Activated CD8-positive, alpha-beta memory T cell treated with anti-CD3 and anti-CD28 coated beads, Interleukin-2, amount 10 ng/mL, durations not matched to agents 7 days and 5 days (primary cell): ENCODE measurements at regions of chr22 and their contacts with region 1.

Region 1: DNA sequence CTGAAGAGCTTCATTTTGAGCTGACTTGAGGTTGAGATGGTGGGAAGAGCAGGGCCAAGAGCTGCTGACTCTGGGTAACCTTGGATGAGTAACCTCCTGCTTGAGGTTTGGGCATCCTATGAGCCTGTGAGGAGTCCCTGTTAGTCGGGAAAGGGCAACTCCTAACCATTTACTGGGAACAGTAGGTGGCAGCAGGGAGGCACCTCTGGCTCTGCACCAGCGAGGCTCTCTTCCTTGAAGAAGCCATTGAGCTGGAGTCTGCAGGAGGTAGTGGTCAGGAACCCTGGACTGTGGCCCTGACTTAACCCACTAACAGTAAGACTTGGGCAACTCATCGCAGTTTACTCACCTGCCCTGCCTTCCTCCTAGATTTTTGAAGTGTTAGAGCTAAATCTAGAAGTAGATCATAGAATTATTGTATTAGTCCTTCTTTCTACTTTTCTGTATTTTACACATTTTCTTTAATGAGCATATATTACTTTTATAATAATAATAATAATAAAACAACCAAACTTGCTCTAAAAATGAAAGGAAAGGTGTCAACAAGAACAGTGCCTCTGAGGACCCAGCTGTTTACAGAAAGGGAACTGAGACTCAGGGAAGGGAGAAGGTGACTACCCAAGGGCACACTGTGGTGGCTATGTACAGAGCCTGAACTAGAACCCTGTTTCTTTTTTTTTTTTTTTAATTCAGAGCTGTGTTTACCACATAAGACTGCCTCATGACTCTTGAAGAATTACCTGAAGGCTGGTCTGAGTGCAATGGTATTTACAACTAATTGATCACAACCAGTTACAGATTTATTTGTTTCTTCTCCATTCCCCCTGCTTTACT is 47.5 kb downstream of the MEI1 start:
- DNase-seq: peak; percentile 72
- ATAC-seq: peak; percentile 96
- H3K4me3 Mint-ChIP-seq: no peak overlapping the region
- H3K27ac Mint-ChIP-seq: no peak overlapping the region
- H3K4me1 Mint-ChIP-seq: peaks cover 6% of the 10 kb centered on the region
- H3K27me3 Mint-ChIP-seq: peaks cover 15% of the 10 kb centered on the region

Region 2: DNA sequence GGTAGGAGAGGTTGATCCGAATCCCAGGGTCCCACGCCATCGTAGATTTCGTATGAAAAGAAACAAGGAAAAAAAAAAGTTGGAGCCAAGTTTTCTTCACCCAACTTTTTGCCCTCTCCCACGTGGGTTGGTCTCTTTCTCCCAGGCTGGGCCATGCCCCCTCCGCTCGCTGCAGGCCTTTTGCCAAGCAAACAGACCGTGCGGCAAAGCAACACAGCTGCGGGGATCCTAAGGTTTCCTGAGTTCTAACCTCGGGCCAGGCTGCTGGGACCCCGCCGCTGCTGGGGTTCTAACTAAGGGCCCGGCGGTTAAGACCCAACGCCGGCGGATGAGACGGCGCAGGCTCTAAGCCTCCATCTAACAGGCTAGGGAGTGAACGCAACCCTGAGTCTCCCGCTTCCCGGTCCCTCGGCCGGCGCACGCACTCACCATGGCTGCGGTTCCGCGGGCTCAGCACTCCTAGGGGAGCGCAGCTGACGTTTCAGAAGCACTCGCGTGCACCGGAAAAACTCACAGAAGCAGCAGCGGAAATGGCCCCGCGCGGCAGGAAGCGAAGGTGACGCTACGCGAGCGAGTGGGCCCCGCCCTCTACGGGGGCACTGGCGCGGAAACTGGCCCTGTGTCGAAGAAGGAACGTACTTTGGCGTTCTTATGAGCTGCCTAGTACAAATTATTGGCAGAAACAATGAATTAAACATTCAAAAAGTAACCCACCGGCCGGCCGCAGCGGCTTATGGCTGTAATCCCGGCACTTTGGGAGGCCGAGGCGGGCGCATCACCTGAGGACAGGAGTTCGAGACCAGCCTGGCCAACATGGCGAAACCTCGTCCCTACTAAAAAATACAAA is 58.2 kb before region 1 on chr22 and contains the start of gene SNU13:
- CTCF ChIA-PET with region 1: no interaction called
- DNase-seq: peak; percentile 96
- ATAC-seq: peak; percentile 93
- H3K4me3 Mint-ChIP-seq: peak within 1 kb of the TSS; percentile 96
- H3K27ac Mint-ChIP-seq: peak within 1 kb of the TSS; percentile 98
- H3K4me1 Mint-ChIP-seq: peaks cover 33% of the 10 kb centered on the region
- H3K27me3 Mint-ChIP-seq: no peaks in the 10 kb centered on the region
- total RNA-seq, gene SNU13: 176 to 193 TPM

Region 3: GRCh38 chr22:41780746-41781505 is 34.1 kb after region 1 on chr22:
- CTCF ChIA-PET with region 1: interaction called, 31 read pairs
- DNase-seq: peak; percentile 98
- ATAC-seq: peak; percentile 97
- H3K4me3 Mint-ChIP-seq: peak overlapping the region; percentile 76
- H3K27ac Mint-ChIP-seq: peak overlapping the region; percentile 99
- H3K4me1 Mint-ChIP-seq: peaks cover 41% of the 10 kb centered on the region
- H3K27me3 Mint-ChIP-seq: no peaks in the 10 kb centered on the region